ENCODE measurements at regions of chr3 and their contacts with region 1.

Region 1: DNA sequence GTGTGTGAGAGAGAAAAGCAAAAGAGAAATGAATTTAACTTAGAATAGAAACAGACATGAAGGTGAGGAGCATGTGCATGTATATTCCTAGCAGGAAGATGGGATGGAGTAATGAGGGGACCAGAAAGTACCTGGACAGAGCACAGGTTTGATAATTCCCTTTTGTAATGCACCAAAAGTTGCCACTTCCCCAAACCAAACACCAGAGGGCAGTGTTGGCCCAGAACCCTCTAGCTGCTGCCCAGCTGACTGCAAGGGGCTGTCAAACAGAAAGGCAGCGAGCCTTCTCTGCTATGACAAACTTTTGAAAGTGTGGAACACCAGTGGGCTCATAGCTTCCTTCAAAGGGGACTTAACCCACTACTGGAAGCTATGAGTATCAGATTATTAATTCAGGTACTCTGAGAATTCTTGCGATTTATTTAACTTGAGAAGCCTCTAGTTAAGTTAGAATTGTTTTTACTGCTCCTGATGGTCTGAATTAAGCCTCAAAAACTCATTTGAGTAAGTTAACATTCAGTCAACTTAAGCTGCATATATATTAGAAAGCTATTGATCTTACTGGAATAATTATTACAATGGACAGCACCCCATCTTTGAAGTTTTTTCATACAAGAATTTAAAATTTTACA is 234.9 kb downstream of the NEK10 start:
- DNase-seq: peak; percentile 35 to 65 (median 58)
- ATAC-seq: peak; percentile 76 to 78
- H3K4me3 ChIP-seq: no peak overlapping the region
- H3K27ac ChIP-seq: no peak overlapping the region
- H3K4me1 ChIP-seq: no peaks in the 10 kb centered on the region
- H3K27me3 ChIP-seq: no peaks in the 10 kb centered on the region

Region 2: DNA sequence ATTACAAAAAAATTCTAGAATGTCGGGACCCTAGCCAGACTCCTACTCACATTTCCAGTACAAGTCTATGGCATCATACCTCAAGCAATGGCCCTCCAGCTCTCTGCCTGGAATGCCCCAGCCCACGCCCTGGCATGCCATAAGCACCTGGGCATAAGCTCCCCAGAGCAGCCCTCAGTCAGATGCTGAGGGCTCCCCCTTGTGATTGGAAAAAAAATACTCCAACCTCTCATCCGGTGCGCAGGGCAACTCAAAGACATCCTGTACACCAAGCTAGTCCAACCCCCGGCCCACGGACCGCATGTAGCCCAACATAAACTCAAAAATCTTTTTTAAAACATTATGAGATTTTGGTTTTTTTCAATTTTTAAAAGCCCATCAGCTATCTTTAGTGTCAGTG is 119.5 kb after region 1 on chr3:
- intact Hi-C with region 1: loop called in 1 of 4 experiments (anchors 10 kb)
- DNase-seq: peak in 1 of 3 donors; percentile 11
- ATAC-seq: no peak
- H3K4me3 ChIP-seq: no peak overlapping the region
- H3K27ac ChIP-seq: no peak overlapping the region
- H3K4me1 ChIP-seq: no peaks in the 10 kb centered on the region
- H3K27me3 ChIP-seq: no peaks in the 10 kb centered on the region

Region 3: GRCh38 chr3:27279123-27279522 is 144.8 kb after region 1 on chr3:
- intact Hi-C with region 1: loop called in 3 of 4 experiments (anchors 10 kb)
- DNase-seq: no peak
- ATAC-seq: no peak
- H3K4me3 ChIP-seq: no peak overlapping the region
- H3K27ac ChIP-seq: no peak overlapping the region
- H3K4me1 ChIP-seq: no peaks in the 10 kb centered on the region
- H3K27me3 ChIP-seq: no peaks in the 10 kb centered on the region

Measured in right cardiac atrium (tissue), 5 donors.